ENCODE measurements at regions of chr2 and their contacts with region 1.

Region 1: GRCh38 chr2:102082571-102083392 is 59.8 kb upstream of the IL1R1 start:
- H3K4me3 Mint-ChIP-seq: peak overlapping the region; percentile 69
- H3K27ac Mint-ChIP-seq: peak overlapping the region; percentile 97
- H3K4me1 Mint-ChIP-seq: peaks cover 46% of the 10 kb centered on the region
- H3K27me3 Mint-ChIP-seq: peaks cover 3% of the 10 kb centered on the region

Region 2: GRCh38 chr2:101931404-101931803 is 151.4 kb before region 1 on chr2:
- intact Hi-C with region 1: no loop called
- H3K4me3 Mint-ChIP-seq: no peak overlapping the region
- H3K27ac Mint-ChIP-seq: peak overlapping the region; percentile 71
- H3K4me1 Mint-ChIP-seq: peaks cover 33% of the 10 kb centered on the region
- H3K27me3 Mint-ChIP-seq: no peaks in the 10 kb centered on the region

Region 3: GRCh38 chr2:102033031-102033749 is 49.6 kb before region 1 on chr2:
- intact Hi-C with region 1: loop called (anchors 5 kb)
- H3K4me3 Mint-ChIP-seq: peak overlapping the region; percentile 69
- H3K27ac Mint-ChIP-seq: peak overlapping the region; percentile 93
- H3K4me1 Mint-ChIP-seq: peaks cover 90% of the 10 kb centered on the region
- H3K27me3 Mint-ChIP-seq: no peaks in the 10 kb centered on the region

Region 4: GRCh38 chr2:102141970-102142828 is 59.4 kb after region 1 on chr2 and contains the start of gene IL1R1:
- intact Hi-C with region 1: loop called (anchors 2 kb)
- H3K4me3 Mint-ChIP-seq: peak within 1 kb of the TSS; percentile 96
- H3K27ac Mint-ChIP-seq: peak within 1 kb of the TSS; percentile 99
- H3K4me1 Mint-ChIP-seq: peaks cover 55% of the 10 kb centered on the region
- H3K27me3 Mint-ChIP-seq: peaks cover 6% of the 10 kb centered on the region